HepG2 (cell line): ENCODE measurements at regions of chrX and their contacts with region 1.

Region 1: GRCh38 chrX:154013614-154014360 is 5.9 kb downstream of the IRAK1 start:
- DNase-seq: no peak
- ATAC-seq: peak; percentile 68
- H3K4me3 ChIP-seq: peak overlapping the region in 1 of 3 experiments; percentile 37; a peak in 1 of 6 replicates
- H3K27ac ChIP-seq: peak overlapping the region; percentile 81
- H3K4me1 ChIP-seq: peaks cover 55% of the 10 kb centered on the region
- H3K27me3 ChIP-seq: no peaks in the 10 kb centered on the region
- CTCF ChIP-seq: peak; percentile 77
- EP300 ChIP-seq: no peak
- POLR2A ChIP-seq: no peak
- RAD21 ChIP-seq: 0 out of 2 replicates have a peak, but pooled peaks have one; percentile 20

Region 2: GRCh38 chrX:153554519-153555167 is 459.1 kb before region 1 on chrX:
- CTCF ChIA-PET with region 1: no interaction called
- POLR2A ChIA-PET with region 1: no interaction called
- in situ Hi-C with region 1: no loop called
- intact Hi-C with region 1: no loop called
- DNase-seq: peak; percentile 27
- ATAC-seq: peak; percentile 82
- H3K4me3 ChIP-seq: no peak overlapping the region
- H3K27ac ChIP-seq: no peak overlapping the region
- H3K4me1 ChIP-seq: peaks cover 5% of the 10 kb centered on the region; the same call in 1 of the 2 replicates
- H3K27me3 ChIP-seq: peaks cover 0 to 47% of the 10 kb centered on the region in 2 experiments; a peak in 3 of 5 replicates
- CTCF ChIP-seq: peak; percentile 81
- EP300 ChIP-seq: no peak
- POLR2A ChIP-seq: no peak
- RAD21 ChIP-seq: peak; percentile 48; the same call in 1 of the 2 replicates

Region 3: DNA sequence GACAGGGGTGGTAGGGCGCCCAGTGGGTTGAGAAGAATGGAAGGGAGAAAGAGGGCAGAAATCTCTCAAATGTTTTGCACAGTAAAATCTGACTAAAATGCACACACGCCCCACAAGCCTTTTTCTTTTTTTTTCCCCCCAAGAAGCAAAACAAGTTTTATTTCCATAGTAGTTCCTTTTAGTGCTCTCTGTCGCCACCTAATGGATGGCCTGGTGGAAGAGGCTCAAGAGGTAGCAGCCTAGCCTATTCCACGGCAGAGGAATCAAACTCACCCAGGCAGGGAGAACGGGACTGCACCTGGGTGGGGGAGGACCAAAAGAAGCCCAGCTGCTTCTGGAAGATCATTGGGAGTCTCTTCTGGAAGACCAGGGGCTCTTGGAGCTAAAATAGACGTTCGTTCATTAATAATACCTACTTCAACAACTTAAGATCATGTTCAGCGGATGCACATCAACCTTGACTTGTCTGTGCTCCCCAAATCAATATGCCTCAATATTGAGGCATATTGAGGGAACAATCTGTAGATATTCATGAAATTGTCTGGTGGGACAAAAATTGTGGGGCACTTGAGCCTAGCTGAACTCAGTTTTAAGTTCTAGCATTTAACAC is 37.5 kb after region 1 on chrX:
- CTCF ChIA-PET with region 1: no interaction called
- POLR2A ChIA-PET with region 1: interaction called, 5 read pairs
- in situ Hi-C with region 1: loop called (anchors 5 kb)
- intact Hi-C with region 1: loop called (anchors 5 kb)
- DNase-seq: peak; percentile 45
- ATAC-seq: peak; percentile 80
- H3K4me3 ChIP-seq: no peak overlapping the region
- H3K27ac ChIP-seq: no peak overlapping the region
- H3K4me1 ChIP-seq: peaks cover 17% of the 10 kb centered on the region
- H3K27me3 ChIP-seq: no peaks in the 10 kb centered on the region; a peak in 1 of 5 replicates
- CTCF ChIP-seq: peak; percentile 66
- EP300 ChIP-seq: no peak
- POLR2A ChIP-seq: no peak
- RAD21 ChIP-seq: no peak